Dorsolateral prefrontal cortex (tissue), 120 donors: ENCODE measurements at regions of chr18 and their contacts with region 1.

Region 1: GRCh38 chr18:66724664-66725356 is 120.9 kb upstream of the CDH19 start:
- DNase-seq: no peak
- H3K4me3 ChIP-seq: no peak overlapping the region
- H3K27ac ChIP-seq: peak overlapping the region in 7 of 59 donors; percentile 0 to 46 (median 26)
- H3K27me3 ChIP-seq: no peaks in the 10 kb centered on the region
- CTCF ChIP-seq: no peak

Region 2: GRCh38 chr18:66616523-66616983 is 108.3 kb before region 1 on chr18:
- intact Hi-C with region 1: loop called in 1 of 2 experiments (anchors 5 kb)
- DNase-seq: peak in 5 of 10 donors; percentile 27 to 45 (median 43)
- H3K4me3 ChIP-seq: no peak overlapping the region
- H3K27ac ChIP-seq: no peak overlapping the region
- H3K27me3 ChIP-seq: no peaks in the 10 kb centered on the region
- CTCF ChIP-seq: peak in 53 of 56 donors; percentile 21 to 77 (median 55)

Region 3: DNA sequence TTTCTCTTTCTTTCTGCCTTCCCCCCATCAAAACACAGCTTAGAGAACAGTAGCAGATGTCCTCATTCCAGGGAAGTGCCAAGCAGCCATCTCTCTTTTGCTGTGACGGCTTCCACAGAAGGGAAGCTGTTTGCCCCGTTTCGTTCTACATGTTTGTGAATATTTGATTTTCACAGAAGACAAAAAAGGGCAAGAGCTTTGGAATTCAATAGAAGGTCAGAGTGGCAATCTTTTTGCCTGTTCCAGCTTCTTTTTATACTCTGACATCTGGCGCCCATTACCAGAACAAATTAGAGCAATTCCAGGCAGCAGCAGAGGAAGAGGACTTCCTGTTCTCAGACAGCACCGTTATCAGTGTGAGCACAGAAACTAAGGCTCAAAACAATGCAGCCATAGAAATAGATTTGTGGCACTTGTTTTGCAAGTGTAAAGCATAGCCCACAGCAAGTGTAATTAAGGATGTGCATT is 41.9 kb before region 1 on chr18:
- intact Hi-C with region 1: loop called in 1 of 2 experiments (anchors 5 kb)
- DNase-seq: peak in 6 of 10 donors; percentile 11 to 50 (median 38)
- H3K4me3 ChIP-seq: peak overlapping the region in 58 of 59 donors; percentile 3 to 69 (median 44)
- H3K27ac ChIP-seq: peak overlapping the region; percentile 54 to 97 (median 88)
- H3K27me3 ChIP-seq: no peaks in the 10 kb centered on the region
- CTCF ChIP-seq: peak in 6 of 56 donors; percentile 9 to 32 (median 18)

Region 4: GRCh38 chr18:66694852-66695251 is 30.0 kb before region 1 on chr18:
- intact Hi-C with region 1: loop called in 1 of 2 experiments (anchors 2 kb)
- DNase-seq: no peak
- H3K4me3 ChIP-seq: no peak overlapping the region
- H3K27ac ChIP-seq: peak overlapping the region in 1 of 59 donors; percentile 39
- H3K27me3 ChIP-seq: peaks cover 0 to 5% (median 0%) of the 10 kb centered on the region in 45 donors
- CTCF ChIP-seq: no peak